ENCODE measurements at regions of chr7 and their contacts with region 1.

Region 1: DNA sequence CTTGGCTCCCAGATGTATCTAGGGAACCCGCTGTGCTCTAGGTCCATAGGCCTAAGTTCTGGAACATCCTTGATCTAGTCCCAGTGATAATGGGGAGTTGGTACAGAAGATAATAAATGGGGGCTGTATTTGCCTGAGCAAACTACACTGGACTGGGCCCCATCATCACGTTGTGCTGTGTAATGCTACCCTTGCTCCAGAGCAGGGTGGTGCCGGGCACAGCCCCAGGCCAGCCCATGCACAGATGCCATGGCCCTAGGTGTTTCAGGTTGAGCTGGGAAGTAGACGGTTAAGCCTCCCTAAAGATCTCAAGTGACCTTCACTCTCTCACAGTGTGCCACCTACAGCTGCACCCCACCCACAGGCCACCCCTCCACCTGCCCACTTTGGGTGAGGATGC is 53.2 kb downstream of the STRA8 start:
- DNase-seq: no peak
- H3K4me3 ChIP-seq: no peak overlapping the region
- H3K27ac ChIP-seq: no peak overlapping the region
- H3K4me1 ChIP-seq: peaks cover 2% of the 10 kb centered on the region in 2 donors
- H3K27me3 ChIP-seq: no peaks in the 10 kb centered on the region
- CTCF ChIP-seq: no peak
- POLR2A ChIP-seq: no peak

Region 2: GRCh38 chr7:135644154-135644553 is 357.3 kb after region 1 on chr7:
- intact Hi-C with region 1: loop called (anchors 5 kb)
- DNase-seq: no peak
- H3K4me3 ChIP-seq: no peak overlapping the region
- H3K27ac ChIP-seq: no peak overlapping the region
- H3K4me1 ChIP-seq: peaks cover 8 to 11% of the 10 kb centered on the region in 2 donors
- H3K27me3 ChIP-seq: no peaks in the 10 kb centered on the region
- CTCF ChIP-seq: no peak
- POLR2A ChIP-seq: no peak

Measured in thyroid gland (tissue), 4 donors.